Prostate gland (tissue), 2 donors: ENCODE measurements at regions of chr11 and their contacts with region 1.

Region 1: GRCh38 chr11:130861902-130862860 is 54.1 kb downstream of the SNX19 start:
- DNase-seq: peak; percentile 86
- H3K4me3 ChIP-seq: no peak overlapping the region
- H3K27ac ChIP-seq: peak overlapping the region in 1 of 2 donors; percentile 1
- H3K4me1 ChIP-seq: no peaks in the 10 kb centered on the region
- H3K27me3 ChIP-seq: no peaks in the 10 kb centered on the region
- CTCF ChIP-seq: peak; percentile 100
- POLR2A ChIP-seq: no peak

Region 2: DNA sequence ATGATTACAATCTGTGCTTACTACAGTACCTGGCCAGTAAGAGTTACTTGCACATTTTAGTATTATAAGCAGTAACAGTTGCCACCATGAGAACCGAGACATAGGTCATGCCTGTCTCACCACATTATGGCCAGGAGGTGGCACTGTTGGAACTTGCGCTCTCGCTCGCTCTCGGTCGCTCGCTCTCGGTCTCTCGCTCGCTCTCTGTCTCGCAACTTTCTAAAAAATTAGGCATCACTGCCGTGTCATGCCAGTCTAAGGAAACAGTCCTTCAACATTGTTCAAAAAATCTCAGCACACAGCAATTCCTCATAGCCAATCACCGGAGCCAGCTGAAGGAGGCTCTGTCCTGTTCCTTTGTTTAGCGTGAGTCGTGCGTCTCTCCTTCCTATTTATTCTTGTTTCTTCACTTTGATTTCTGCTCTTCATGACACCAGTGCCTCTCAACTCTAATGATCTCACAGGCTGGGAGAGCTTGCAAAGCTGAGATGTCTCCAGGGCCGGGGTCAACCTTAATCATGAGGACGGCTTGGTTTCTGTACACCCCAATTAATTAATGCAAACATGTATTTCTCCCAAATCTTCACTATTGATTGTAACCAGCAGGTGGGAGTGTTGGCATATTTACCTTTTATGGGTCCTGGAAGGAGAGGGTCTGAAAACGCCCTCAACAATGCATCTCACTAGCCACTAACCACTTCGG is 427.5 kb before region 1 on chr11:
- intact Hi-C with region 1: loop called (anchors 1 kb)
- DNase-seq: peak; percentile 75
- H3K4me3 ChIP-seq: peak overlapping the region; percentile 33 to 40
- H3K27ac ChIP-seq: peak overlapping the region; percentile 68 to 70
- H3K4me1 ChIP-seq: no peaks in the 10 kb centered on the region
- H3K27me3 ChIP-seq: no peaks in the 10 kb centered on the region
- CTCF ChIP-seq: peak; percentile 36 to 93 (median 74)
- POLR2A ChIP-seq: no peak